Sciatic nerve (tissue), 2 donors: ENCODE measurements at regions of chr16 and their contacts with region 1.

Region 1: DNA sequence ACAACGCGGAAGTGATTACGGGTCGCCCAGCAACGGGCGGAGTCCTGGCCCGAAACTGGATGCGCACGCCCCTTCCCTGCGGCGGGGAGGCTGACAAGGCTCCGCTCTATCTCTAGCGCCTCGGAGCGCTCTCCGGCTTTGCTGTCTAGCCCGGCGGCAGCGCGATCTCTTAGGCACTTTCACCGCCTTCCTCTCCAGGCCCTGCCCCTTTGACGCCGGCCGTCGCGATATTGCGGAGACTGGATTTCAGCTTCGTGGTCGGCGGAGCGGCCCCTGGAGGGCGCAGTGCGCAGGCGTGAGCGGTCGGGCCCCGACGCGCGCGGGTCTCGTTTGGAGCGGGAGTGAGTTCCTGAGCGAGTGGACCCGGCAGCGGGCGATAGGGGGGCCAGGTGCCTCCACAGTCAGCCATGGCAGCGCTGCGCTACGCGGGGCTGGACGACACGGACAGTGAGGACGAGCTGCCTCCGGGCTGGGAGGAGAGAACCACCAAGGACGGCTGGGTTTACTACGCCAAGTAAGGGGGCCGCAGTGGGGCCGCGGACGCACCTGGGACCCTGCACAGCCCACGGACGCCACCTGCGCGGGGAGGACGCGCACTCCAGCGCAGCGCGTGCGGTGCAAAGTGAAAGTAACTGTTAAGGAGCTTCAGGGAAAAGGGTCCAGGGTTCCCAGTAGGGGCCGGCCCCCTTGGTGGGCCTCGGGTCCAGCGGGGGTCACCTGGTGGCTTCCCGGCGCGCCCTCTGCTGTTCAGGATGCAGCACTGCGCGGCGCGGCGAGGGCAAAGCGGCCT is at the start of gene WWOX:
- DNase-seq: peak; percentile 97
- ATAC-seq: peak; percentile 99
- total RNA-seq, gene WWOX: 30.7 TPM

Region 2: DNA sequence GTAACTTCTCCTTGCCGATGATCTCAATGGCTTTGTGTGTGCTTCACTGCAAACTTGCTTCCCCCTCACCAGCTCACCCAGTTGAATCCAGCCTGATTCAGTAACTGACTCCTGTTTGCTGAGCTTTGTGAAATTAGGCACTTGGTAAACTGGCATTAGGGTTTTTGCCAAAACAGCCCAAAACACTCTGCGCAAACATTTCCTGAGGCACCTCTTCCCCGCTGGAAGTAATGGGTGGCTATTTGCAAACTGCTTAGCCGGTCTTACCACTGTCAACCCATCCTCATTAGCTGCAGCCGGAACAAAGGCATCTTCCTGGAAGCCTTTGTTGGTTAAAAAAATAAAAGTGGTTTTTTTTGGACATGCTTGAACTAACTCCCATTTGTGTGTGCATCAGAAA is 1147.8 kb after region 1 on chr16:
- intact Hi-C with region 1: loop called (anchors 10 kb)
- DNase-seq: no peak
- ATAC-seq: no peak